ENCODE measurements at regions of chr13 and their contacts with region 1.

Region 1: GRCh38 chr13:32586080-32586900 is at the start of gene PDS5B:
- DNase-seq: peak; percentile 81 to 91
- H3K4me3 ChIP-seq: peak within 1 kb of the TSS; percentile 71
- H3K27ac ChIP-seq: peak within 1 kb of the TSS; percentile 72
- H3K4me1 ChIP-seq: peaks cover 30% of the 10 kb centered on the region
- H3K27me3 ChIP-seq: no peaks in the 10 kb centered on the region
- CTCF ChIP-seq: peak; percentile 69
- total RNA-seq, gene PDS5B: 37.1 and 37.6 TPM in 2 replicates

Region 2: DNA sequence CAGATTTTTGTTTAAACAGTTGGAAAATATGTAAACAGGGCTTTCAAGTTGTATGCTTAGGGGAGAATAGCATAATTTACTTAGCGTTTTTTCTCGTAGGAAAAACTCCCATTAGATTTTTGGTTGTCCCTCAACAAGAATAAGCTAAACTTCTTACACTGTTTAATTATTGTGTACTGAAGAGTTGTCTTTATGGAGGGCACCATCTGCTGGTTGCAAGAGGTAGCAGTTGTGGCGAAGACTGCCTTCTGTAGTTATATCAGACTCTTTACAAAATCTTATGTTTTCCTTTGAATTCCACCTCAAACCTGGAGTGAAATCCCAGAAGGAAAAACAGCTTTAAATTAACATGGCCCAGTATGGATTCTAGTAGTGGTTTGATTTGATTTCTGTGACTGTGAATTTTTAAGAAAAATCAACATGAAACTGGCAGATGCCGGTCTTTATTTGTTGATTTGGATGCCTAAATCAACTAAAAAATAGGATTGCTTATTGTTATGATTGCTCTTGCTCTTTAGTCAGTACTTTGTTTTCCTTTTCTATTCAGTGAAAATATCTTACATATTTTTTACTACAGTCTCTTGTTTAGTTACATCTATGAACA is 53.3 kb after region 1 on chr13:
- CTCF ChIA-PET with region 1: interaction called, 3 read pairs
- POLR2A ChIA-PET with region 1: interaction called, 4 read pairs
- intact Hi-C with region 1: loop called (anchors 2 kb)
- DNase-seq: peak in 1 of 2 experiments; percentile 8
- H3K4me3 ChIP-seq: no peak overlapping the region
- H3K27ac ChIP-seq: no peak overlapping the region
- H3K4me1 ChIP-seq: no peaks in the 10 kb centered on the region
- H3K27me3 ChIP-seq: no peaks in the 10 kb centered on the region
- CTCF ChIP-seq: peak; percentile 65

Region 3: DNA sequence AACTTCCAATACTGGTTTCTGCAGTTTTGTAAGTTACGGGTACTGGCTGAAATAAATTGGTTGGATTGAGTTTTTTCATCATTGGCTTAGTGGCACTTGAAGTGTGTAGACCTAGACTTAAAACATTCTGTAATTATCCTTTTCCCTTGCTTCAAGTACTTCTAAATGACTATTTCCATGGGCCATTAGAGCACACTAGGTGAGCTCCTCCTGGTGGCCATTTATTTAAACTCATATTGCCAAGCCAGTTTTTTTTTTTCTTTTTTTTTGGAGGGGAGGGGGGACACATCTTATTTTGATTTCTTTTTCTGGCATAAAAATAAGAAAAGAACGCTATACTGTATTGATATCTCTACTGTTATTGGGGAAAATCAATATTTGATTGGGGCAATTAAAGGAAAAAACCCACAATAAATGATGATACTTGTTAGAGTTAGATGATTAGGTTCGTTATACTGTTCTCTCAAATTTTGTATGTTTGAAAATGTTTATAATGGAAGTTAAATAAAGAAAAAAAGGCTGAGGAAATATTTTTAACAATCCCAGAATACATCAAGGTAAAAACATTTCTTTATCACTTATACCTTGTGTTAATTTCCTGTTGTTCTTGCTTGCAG is 82.8 kb after region 1 on chr13:
- CTCF ChIA-PET with region 1: interaction called, 3 read pairs
- POLR2A ChIA-PET with region 1: no interaction called
- intact Hi-C with region 1: loop called (anchors 1 kb)
- DNase-seq: peak in 1 of 2 experiments; percentile 39
- H3K4me3 ChIP-seq: no peak overlapping the region
- H3K27ac ChIP-seq: no peak overlapping the region
- H3K4me1 ChIP-seq: no peaks in the 10 kb centered on the region
- H3K27me3 ChIP-seq: no peaks in the 10 kb centered on the region
- CTCF ChIP-seq: peak; percentile 81

Region 4: DNA sequence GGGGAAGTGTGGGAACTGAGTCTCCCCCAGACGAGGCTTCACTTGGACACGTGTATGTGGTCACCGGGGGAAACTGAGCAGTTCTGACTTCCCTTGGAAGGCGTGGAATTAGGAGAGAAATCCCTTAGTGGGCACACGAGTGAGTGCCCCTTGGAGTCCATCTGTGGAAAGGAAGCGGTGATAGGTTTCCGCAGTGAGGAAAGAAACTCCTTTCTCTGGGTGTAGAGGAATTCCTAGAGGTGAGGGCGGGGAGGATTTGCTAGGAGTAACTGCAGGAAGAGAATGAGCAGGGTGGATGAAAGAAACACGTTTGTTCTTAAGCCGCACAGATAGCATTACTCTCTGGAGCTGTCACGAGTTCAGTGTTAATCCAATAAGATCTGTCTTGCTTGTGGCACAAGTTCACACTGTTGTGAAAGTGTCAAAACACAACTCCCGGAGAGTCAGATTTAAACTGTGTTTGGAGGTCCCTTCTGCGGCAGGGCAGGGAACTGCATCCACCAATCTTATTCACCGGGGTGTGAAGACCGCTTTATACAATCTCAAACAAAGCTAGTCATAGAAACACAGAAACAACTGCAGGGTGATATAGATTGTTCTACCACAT is 431.1 kb after region 1 on chr13:
- CTCF ChIA-PET with region 1: no interaction called
- POLR2A ChIA-PET with region 1: no interaction called
- intact Hi-C with region 1: loop called (anchors 2 kb)
- DNase-seq: peak in 1 of 2 experiments; percentile 17
- H3K4me3 ChIP-seq: no peak overlapping the region
- H3K27ac ChIP-seq: no peak overlapping the region
- H3K4me1 ChIP-seq: peaks cover 17% of the 10 kb centered on the region; the same call in 1 of the 2 replicates
- H3K27me3 ChIP-seq: no peaks in the 10 kb centered on the region
- CTCF ChIP-seq: no peak

Region 5: DNA sequence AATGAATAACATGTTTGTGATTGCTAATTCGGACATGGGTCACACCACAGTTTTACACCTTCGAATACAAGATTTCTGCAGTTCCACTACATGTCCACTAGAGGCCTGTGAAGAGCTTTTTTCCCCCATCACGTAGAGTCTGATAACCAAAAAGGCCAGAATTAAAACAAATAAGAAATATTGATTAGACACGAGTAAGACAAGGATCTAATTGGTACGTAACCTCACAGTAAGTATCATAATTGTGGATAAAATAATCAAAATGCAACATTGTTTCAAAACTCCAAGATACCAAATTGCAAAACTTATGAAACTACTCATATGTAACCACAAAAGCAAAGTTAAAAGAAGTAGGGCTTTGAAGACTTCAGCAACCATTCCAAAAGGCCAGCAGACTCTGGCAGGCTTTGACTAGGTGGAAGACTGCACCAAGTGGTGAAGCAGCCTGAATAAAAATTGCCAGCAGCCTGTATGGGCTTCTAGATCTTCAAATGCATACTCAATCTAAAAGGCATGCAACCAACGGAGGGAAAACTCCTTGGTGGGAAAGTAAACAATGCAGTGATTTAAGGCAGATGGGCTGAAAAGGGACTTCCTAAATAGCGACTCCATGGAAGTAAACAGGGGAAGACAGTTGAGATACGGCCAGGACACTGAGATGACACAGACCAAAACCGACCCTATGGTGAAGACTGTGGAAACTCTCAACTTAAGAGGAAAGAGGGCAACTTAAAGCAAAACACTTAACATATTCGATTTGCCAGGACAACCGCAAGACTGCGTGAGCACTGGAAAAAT is 642.6 kb after region 1 on chr13:
- CTCF ChIA-PET with region 1: no interaction called
- POLR2A ChIA-PET with region 1: no interaction called
- intact Hi-C with region 1: loop called (anchors 5 kb)
- DNase-seq: no peak
- H3K4me3 ChIP-seq: no peak overlapping the region
- H3K27ac ChIP-seq: no peak overlapping the region
- H3K4me1 ChIP-seq: peaks cover 10% of the 10 kb centered on the region; the same call in 1 of the 2 replicates
- H3K27me3 ChIP-seq: no peaks in the 10 kb centered on the region
- CTCF ChIP-seq: peak; percentile 98

Region 6: GRCh38 chr13:33817901-33818706 is 1231.8 kb after region 1 on chr13 and contains the start of gene RFC3:
- CTCF ChIA-PET with region 1: no interaction called
- POLR2A ChIA-PET with region 1: no interaction called
- intact Hi-C with region 1: loop called (anchors 2 kb)
- DNase-seq: peak; percentile 83 to 86
- H3K4me3 ChIP-seq: peak within 1 kb of the TSS; percentile 98
- H3K27ac ChIP-seq: peak within 1 kb of the TSS; percentile 68
- H3K4me1 ChIP-seq: peaks cover 9% of the 10 kb centered on the region
- H3K27me3 ChIP-seq: no peaks in the 10 kb centered on the region
- CTCF ChIP-seq: no peak
- total RNA-seq, gene RFC3: 14.2 and 20.4 TPM in 2 replicates